ENCODE measurements at regions of chr17 and their contacts with region 1.

Region 1: DNA sequence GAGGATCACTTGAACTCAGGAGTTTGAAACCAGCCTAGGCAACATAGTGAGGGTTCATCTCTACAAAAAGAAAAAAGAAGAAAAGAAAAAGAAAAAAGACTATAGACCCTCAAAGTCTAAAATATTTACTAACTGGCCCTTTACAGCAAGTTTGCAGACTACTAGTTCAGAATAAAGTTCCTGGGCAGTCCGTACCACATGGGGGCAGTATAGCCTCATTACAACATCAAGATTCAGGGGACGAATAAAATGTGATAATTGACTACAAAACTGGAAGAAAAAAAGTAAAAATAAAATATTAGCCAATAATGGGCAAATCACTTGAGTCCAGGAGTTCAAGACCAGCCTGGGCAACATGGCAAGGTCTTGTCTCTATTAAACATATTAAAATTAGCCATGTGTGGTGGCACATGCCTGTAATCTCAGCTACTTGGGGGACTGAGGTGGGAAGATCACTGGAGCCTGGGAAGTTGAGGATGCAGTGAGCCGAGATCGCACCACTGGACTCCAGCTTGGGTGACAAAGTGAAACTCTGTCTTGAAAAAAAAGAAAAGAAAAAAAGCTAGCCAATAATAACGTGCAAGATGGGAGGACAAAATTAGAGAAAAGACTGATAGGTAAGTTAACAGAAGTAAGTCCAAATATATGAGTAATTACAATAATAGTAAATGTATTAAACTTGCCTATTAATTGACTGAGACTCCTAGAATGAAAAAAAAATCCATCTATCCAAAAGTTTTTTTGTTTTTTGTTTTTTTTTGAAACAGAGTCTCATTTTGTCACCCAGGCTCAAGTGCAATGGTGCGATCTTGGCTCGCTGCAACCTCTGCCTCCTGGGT is 129.4 kb upstream of the SEC14L1 start:
- DNase-seq: peak; percentile 39 to 54 (median 48)
- H3K4me3 ChIP-seq: no peak overlapping the region
- H3K4me3 Mint-ChIP-seq: no peak overlapping the region
- H3K27ac ChIP-seq: no peak overlapping the region
- H3K27ac Mint-ChIP-seq: no peak overlapping the region
- H3K4me1 ChIP-seq: no peaks in the 10 kb centered on the region
- H3K4me1 Mint-ChIP-seq: peaks cover 0 to 3% (median under 1%) of the 10 kb centered on the region in 4 donors
- H3K27me3 ChIP-seq: no peaks in the 10 kb centered on the region
- H3K27me3 Mint-ChIP-seq: peaks cover 5% of the 10 kb centered on the region in 2 donors

Region 2: DNA sequence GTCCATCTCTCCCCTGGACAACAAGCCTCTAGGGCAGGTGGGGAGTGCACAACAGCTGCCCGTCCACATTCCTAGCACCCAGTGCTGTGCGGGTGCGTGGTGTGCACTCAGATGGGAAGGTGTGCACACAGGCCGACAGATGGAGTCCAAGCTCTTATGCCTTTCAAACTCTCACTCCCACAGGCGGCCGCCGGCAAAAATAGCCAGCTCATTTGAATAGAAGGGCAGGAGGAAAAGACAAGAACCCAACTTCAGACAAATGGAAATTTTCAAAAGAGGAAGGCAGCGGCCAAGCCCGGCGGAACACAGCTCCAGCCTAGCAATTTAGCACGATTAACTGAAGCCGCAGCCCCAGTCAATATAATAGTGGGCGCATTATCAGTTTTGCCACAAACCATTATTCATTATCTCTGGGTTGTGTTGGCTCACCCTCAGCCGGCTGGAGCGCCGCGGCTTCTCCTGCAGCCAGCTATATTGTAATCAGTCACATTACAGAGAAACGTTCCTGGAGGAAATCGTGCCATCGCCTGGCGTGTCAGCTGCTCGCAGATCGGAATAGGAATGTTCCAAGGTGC is 25.5 kb after region 1 on chr17:
- CTCF ChIA-PET with region 1: interaction called, 3 read pairs
- POLR2A ChIA-PET with region 1: no interaction called
- intact Hi-C with region 1: loop called (anchors 1 kb)
- DNase-seq: no peak
- H3K4me3 ChIP-seq: no peak overlapping the region
- H3K4me3 Mint-ChIP-seq: no peak overlapping the region
- H3K27ac ChIP-seq: no peak overlapping the region
- H3K27ac Mint-ChIP-seq: no peak overlapping the region
- H3K4me1 ChIP-seq: no peaks in the 10 kb centered on the region
- H3K4me1 Mint-ChIP-seq: no peaks in the 10 kb centered on the region
- H3K27me3 ChIP-seq: peaks cover 6% of the 10 kb centered on the region
- H3K27me3 Mint-ChIP-seq: peaks cover 4 to 19% of the 10 kb centered on the region in 2 donors

Region 3: GRCh38 chr17:77247048-77247541 is 235.7 kb after region 1 on chr17:
- CTCF ChIA-PET with region 1: no interaction called
- POLR2A ChIA-PET with region 1: no interaction called
- intact Hi-C with region 1: loop called (anchors 5 kb)
- DNase-seq: peak; percentile 77 to 84 (median 80)
- H3K4me3 ChIP-seq: peak overlapping the region in 1 of 2 donors; percentile 43
- H3K4me3 Mint-ChIP-seq: peak overlapping the region; percentile 55 to 82 (median 65)
- H3K27ac ChIP-seq: no peak overlapping the region
- H3K27ac Mint-ChIP-seq: peak overlapping the region in 1 of 7 donors; percentile 88
- H3K4me1 ChIP-seq: peaks cover 14% of the 10 kb centered on the region
- H3K4me1 Mint-ChIP-seq: peaks cover 5 to 12% (median 6%) of the 10 kb centered on the region in 4 donors
- H3K27me3 ChIP-seq: no peaks in the 10 kb centered on the region
- H3K27me3 Mint-ChIP-seq: peaks cover 2 to 18% of the 10 kb centered on the region in 2 donors